ENCODE measurements at regions of chr7 and their contacts with region 1.

Region 1: GRCh38 chr7:135170274-135170997 is at the start of gene CYREN:
- DNase-seq: peak; percentile 95

Region 2: GRCh38 chr7:134710859-134711624 is 459.4 kb before region 1 on chr7:
- in situ Hi-C with region 1: no loop called
- DNase-seq: no peak

Region 3: GRCh38 chr7:134986363-134987251 is 183.8 kb before region 1 on chr7 and contains the start of gene AGBL3:
- in situ Hi-C with region 1: loop called (anchors 25 kb)
- DNase-seq: peak; percentile 94

Region 4: GRCh38 chr7:135397689-135398088 is 227.3 kb after region 1 on chr7:
- in situ Hi-C with region 1: no loop called
- DNase-seq: no peak

Region 5: GRCh38 chr7:135877805-135878204 is 707.4 kb after region 1 on chr7:
- in situ Hi-C with region 1: no loop called
- DNase-seq: no peak

Measured in KBM-7 (cell line).